GM18951 (cell line): ENCODE measurements at regions of chrX and their contacts with region 1.

Region 1: DNA sequence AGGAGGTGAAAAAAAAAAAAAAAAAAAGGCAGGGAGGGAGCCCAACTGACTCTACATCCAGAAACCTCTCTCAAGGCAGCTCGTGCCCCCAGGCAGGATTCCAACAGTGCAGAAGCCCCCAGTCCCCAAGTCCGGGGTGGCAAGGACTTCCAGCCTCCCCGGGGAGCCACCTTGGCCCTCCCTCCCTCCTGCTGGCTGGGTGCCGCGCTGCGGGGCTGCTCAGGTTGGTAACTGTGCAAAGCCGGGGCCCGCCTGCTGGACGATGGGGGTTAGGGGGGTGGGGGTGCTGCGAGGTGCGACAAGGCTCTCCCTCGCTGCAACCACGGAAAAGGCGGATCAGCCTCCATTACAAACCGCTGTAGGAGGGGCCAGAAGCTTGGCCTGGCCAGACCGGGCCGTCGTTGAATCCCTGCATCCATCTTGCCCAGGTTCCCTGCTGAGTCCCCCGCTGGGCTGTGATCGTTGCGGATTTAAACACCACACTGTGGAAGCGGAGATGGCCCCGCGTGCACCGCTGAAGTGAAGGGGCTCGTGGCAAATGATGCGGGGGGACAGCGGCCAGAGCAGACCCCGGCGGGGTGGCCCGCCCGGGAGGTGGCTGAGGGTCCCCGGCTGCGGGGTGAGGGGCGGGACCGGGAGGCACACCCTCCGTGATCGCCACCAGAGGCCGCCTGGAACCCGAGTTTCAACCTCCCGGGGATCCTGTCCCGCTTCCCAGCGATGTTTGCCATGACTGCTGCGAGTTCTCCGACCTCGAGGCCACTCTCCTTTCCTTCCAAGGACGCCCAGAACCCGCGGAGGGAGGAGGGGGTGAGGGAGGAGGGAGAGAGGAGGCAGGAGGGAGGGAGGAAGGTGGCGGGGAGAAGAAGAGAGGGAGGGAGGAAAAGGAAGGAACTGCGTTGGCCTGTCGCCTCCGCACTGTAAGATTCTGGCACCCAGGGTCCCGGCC is 58.0 kb upstream of the DDX3X start:
- POLR2A ChIP-seq: no peak

Region 2: GRCh38 chrX:41720125-41720779 is 444.3 kb after region 1 on chrX:
- in situ Hi-C with region 1: loop called (anchors 25 kb)
- POLR2A ChIP-seq: no peak